HCT116 (cell line): ENCODE measurements at regions of chr9 and their contacts with region 1.

Region 1: DNA sequence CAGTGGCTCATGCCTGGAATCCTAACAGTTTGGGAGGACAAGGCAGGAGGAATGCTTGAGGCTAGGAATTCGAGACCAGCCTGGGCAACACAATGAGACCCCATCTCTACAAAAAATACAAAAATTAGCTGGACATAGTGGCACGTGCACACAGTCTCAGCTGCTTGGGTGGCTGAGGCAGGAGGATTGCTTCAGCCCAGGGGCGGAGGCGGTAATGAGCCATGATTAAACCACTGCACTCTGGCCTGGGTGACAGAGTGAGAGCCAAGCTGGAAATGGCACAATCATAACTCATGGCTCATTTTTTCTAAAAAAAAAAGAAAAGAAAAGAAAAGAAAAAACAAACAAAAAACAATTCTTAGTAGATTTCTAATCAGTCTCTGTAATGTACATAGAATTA is 446.2 kb downstream of the ELAVL2 start:
- DNase-seq: no peak
- ATAC-seq: no peak
- H3K4me3 ChIP-seq: no peak overlapping the region
- H3K27ac ChIP-seq: no peak overlapping the region
- H3K4me1 ChIP-seq: no peaks in the 10 kb centered on the region
- H3K27me3 ChIP-seq: no peaks in the 10 kb centered on the region
- CTCF ChIP-seq: no peak
- POLR2A ChIP-seq: no peak
- RAD21 ChIP-seq: no peak

Region 2: GRCh38 chr9:23123048-23123632 is 256.7 kb before region 1 on chr9:
- CTCF ChIA-PET with region 1: no interaction called
- POLR2A ChIA-PET with region 1: no interaction called
- RAD21 ChIA-PET with region 1: no interaction called
- intact Hi-C with region 1: no loop called
- DNase-seq: no peak
- ATAC-seq: no peak
- H3K4me3 ChIP-seq: no peak overlapping the region
- H3K27ac ChIP-seq: no peak overlapping the region
- H3K4me1 ChIP-seq: no peaks in the 10 kb centered on the region
- H3K27me3 ChIP-seq: no peaks in the 10 kb centered on the region
- CTCF ChIP-seq: peak in 2 of 3 experiments; percentile 33 to 47; a peak in 3 of 6 replicates
- POLR2A ChIP-seq: no peak
- RAD21 ChIP-seq: 0 out of 2 replicates have a peak, but pooled peaks have one; percentile 6

Region 3: DNA sequence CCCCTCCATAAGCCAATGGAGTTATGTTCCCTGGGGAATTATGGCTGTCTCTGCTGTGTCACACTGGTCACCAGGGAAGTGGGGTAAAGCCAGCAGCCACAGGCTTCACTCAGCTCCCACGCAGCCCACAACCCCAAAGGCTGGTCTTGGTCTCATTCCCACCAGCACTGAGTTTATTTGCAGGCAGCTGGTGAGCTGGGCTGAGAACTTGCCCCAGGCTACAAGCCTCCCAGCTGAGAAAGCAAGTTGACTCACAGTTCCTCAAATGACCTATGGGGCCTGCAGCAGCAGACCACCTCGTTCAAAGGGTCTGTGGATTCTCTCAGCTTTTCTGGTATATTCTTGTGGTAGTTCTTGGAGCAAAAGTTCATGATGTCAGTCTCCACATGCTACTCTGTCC is 22.2 kb before region 1 on chr9:
- CTCF ChIA-PET with region 1: no interaction called
- POLR2A ChIA-PET with region 1: no interaction called
- RAD21 ChIA-PET with region 1: no interaction called
- intact Hi-C with region 1: loop called (anchors 1 kb)
- DNase-seq: no peak
- ATAC-seq: no peak
- H3K4me3 ChIP-seq: no peak overlapping the region
- H3K27ac ChIP-seq: no peak overlapping the region
- H3K4me1 ChIP-seq: no peaks in the 10 kb centered on the region
- H3K27me3 ChIP-seq: no peaks in the 10 kb centered on the region
- CTCF ChIP-seq: no peak
- POLR2A ChIP-seq: no peak
- RAD21 ChIP-seq: no peak